HepG2 (cell line): ENCODE measurements at regions of chr9 and their contacts with region 1.

Region 1: DNA sequence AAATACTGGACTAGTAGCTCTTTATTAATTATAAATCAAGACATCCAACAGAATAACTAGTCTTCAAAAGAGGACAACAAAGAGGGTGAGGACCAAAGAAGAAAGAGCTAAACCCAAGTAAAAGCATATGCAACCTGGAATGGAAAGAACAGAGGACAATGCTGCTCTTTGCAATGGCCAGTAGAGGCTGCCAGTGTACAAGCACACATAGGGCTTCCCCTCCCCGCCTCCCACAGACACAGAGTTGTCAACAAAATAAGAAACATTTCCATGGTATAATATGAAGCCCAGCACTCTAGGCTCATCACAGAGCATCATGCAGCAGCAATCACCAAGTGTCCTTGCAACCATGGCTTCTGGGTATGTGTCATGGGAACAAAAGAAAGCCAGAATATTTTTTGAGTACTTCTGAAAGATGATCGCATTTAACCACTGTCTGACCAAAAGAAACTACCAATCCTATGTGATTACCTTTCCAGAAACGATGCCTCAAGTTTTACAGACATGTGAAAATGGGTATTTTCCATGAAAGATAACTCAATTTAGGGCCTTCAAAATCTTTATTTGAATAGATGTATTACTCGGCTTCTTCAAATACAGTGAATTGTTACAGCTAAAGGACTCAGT is 58.1 kb downstream of the RFX3 start:
- DNase-seq: peak; percentile 63
- ATAC-seq: peak; percentile 100
- H3K4me3 ChIP-seq: no peak overlapping the region
- H3K27ac ChIP-seq: no peak overlapping the region
- H3K4me1 ChIP-seq: no peaks in the 10 kb centered on the region
- H3K27me3 ChIP-seq: no peaks in the 10 kb centered on the region
- CTCF ChIP-seq: peak; percentile 85
- EP300 ChIP-seq: no peak
- POLR2A ChIP-seq: no peak
- RAD21 ChIP-seq: peak; percentile 63; the same call in 1 of the 2 replicates

Region 2: GRCh38 chr9:3647652-3648051 is 179.9 kb after region 1 on chr9:
- CTCF ChIA-PET with region 1: no interaction called
- POLR2A ChIA-PET with region 1: no interaction called
- in situ Hi-C with region 1: loop called (anchors 10 kb)
- intact Hi-C with region 1: loop called (anchors 1 kb)
- DNase-seq: no peak
- ATAC-seq: no peak
- H3K4me3 ChIP-seq: no peak overlapping the region
- H3K27ac ChIP-seq: no peak overlapping the region
- H3K4me1 ChIP-seq: no peaks in the 10 kb centered on the region
- H3K27me3 ChIP-seq: no peaks in the 10 kb centered on the region
- CTCF ChIP-seq: no peak
- EP300 ChIP-seq: no peak
- POLR2A ChIP-seq: no peak
- RAD21 ChIP-seq: no peak